Naive thymus-derived CD4-positive, alpha-beta T cell (primary cell): ENCODE measurements at regions of chr12 and their contacts with region 1.

Region 1: DNA sequence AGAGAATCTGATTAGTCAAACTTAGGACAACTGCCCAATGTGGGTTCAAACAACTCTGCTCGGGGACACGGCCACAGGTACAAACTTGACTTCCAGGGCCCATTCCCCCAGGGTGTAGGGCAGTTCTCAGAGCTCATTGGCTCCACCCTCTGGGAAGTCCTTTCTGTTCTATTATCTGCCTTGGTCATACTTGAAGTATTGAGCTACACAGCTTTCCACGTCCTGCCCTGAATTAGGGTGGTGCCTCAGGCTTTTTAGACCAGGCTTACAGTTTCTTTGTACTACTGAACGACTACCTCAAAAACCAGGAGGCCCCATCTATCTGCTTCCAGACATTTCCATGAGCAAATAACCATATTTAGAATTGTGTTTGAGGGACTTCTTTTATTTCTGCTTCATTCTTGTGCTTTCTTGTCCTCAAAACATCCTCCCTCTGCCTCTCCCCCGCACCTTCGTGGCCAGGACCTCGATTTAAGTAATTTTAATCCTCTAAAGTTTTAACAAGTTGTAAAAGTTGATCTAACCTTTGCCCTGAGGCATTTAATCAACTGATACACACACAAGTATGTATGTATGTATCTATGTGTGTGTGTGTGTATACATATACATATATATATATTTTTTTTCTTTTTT is 281.7 kb upstream of the AMIGO2 start:
- DNase-seq: peak in 8 of 9 donors; percentile 10 to 50 (median 32)
- ATAC-seq: peak; percentile 68
- H3K4me3 ChIP-seq: peak overlapping the region; percentile 48
- H3K4me3 Mint-ChIP-seq: peak overlapping the region; percentile 78 to 88 (median 84)
- H3K27ac ChIP-seq: peak overlapping the region; percentile 80
- H3K27ac Mint-ChIP-seq: peak overlapping the region in 8 of 9 donors; percentile 96 to 100 (median 98)
- H3K4me1 ChIP-seq: peaks cover 56 to 67% of the 10 kb centered on the region in 2 donors
- H3K4me1 Mint-ChIP-seq: peaks cover 52 to 68% (median 59%) of the 10 kb centered on the region in 7 donors
- H3K27me3 ChIP-seq: no peaks in the 10 kb centered on the region
- H3K27me3 Mint-ChIP-seq: no peaks in the 10 kb centered on the region

Region 2: GRCh38 chr12:46372544-46373110 is 988.9 kb before region 1 on chr12 and contains the start of gene SLC38A2:
- CTCF ChIA-PET with region 1: no interaction called
- POLR2A ChIA-PET with region 1: no interaction called
- intact Hi-C with region 1: loop called in 1 of 2 experiments (anchors 2 kb)
- DNase-seq: peak; percentile 95 to 98 (median 96)
- ATAC-seq: peak; percentile 96
- H3K4me3 ChIP-seq: peak within 1 kb of the TSS; percentile 87
- H3K4me3 Mint-ChIP-seq: peak within 1 kb of the TSS; percentile 79 to 99 (median 96)
- H3K27ac ChIP-seq: peak within 1 kb of the TSS; percentile 89
- H3K27ac Mint-ChIP-seq: peak within 1 kb of the TSS; percentile 91 to 100 (median 99)
- H3K4me1 ChIP-seq: peaks cover 37 to 41% of the 10 kb centered on the region in 2 donors
- H3K4me1 Mint-ChIP-seq: peaks cover 31 to 68% (median 59%) of the 10 kb centered on the region in 7 donors
- H3K27me3 ChIP-seq: no peaks in the 10 kb centered on the region
- H3K27me3 Mint-ChIP-seq: peaks cover 0 to 11% (median 0%) of the 10 kb centered on the region in 5 donors
- total RNA-seq, gene SLC38A2: 157 to 269 (median 175) TPM

Region 3: DNA sequence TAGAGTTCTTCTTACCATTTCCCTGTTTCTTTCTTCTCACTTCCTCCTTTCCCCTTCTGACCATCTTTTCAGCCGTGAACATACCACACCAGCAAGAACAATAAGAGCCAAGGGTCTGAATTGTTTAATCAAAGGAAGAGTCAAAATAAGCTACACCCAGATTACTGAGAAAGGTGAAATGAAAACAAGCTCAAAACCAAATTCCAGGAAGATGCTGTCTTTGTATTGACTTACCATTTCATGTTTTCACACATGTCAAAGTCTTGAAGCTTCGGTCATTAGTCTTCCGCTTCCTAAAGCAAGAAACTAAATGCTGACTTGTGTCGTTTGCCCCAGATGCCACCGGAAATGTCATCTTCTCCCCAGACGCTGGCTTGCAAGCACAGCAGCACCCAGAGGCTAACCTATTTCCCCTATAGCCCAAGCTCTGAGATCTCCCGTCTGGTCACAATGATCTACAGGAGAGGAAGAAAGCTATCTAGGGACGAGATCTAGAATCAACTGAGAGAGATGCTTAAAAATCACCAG is 145.3 kb before region 1 on chr12:
- CTCF ChIA-PET with region 1: interaction called, 3 read pairs
- POLR2A ChIA-PET with region 1: interaction called, 21 read pairs
- intact Hi-C with region 1: loop called (anchors 1 kb)
- DNase-seq: peak in 8 of 9 donors; percentile 56 to 82 (median 72)
- ATAC-seq: peak; percentile 81
- H3K4me3 ChIP-seq: peak overlapping the region; percentile 80
- H3K4me3 Mint-ChIP-seq: peak overlapping the region; percentile 91 to 100 (median 98)
- H3K27ac ChIP-seq: peak overlapping the region; percentile 76
- H3K27ac Mint-ChIP-seq: peak overlapping the region; percentile 91 to 98 (median 96)
- H3K4me1 ChIP-seq: peaks cover 9 to 14% of the 10 kb centered on the region in 2 donors
- H3K4me1 Mint-ChIP-seq: peaks cover 6 to 52% (median 26%) of the 10 kb centered on the region in 7 donors
- H3K27me3 ChIP-seq: no peaks in the 10 kb centered on the region
- H3K27me3 Mint-ChIP-seq: peaks cover 0 to 4% (median 0%) of the 10 kb centered on the region in 5 donors

Region 4: DNA sequence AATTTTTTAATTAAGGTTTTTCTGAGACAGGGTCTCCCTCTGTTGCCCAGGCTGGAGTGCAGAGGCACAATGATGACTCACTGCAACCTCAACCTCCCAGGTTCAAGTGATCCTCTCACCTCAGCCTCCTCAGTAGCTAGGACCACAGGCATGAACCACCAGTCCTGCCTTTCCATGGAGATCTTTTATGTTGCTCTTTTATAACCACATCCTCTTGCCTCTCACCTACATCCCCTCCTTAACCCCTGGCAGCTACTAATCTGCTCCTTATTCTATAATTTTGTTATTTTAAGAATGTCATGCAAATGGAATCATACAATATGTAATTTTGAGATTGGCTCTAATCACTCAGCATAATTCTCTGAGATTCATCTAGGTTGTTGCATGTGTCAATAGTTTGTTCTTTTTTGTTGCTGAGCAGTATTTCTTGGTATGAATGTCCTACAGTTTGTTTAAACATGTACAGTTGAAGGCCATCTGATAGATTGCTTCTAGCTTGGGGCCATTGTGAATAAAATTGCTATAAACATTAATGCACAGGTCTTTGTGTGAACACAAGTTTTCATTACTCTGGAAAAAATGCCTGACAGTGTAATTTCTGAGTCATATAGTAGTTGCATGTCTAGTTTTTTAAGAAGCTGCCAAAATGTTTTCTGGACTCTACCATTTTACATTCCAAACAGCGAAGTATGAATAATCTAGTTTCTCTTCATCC is 32.5 kb before region 1 on chr12:
- CTCF ChIA-PET with region 1: interaction called, 5 read pairs
- POLR2A ChIA-PET with region 1: no interaction called
- intact Hi-C with region 1: loop called in 1 of 2 experiments (anchors 5 kb)
- DNase-seq: peak in 1 of 9 donors; percentile 10
- ATAC-seq: no peak
- H3K4me3 ChIP-seq: no peak overlapping the region
- H3K4me3 Mint-ChIP-seq: peak overlapping the region in 3 of 10 donors; percentile 44 to 57 (median 47)
- H3K27ac ChIP-seq: no peak overlapping the region
- H3K27ac Mint-ChIP-seq: peak overlapping the region in 8 of 9 donors; percentile 3 to 74 (median 14)
- H3K4me1 ChIP-seq: peaks cover 5 to 14% of the 10 kb centered on the region in 2 donors
- H3K4me1 Mint-ChIP-seq: peaks cover 15 to 33% (median 27%) of the 10 kb centered on the region in 7 donors
- H3K27me3 ChIP-seq: no peaks in the 10 kb centered on the region
- H3K27me3 Mint-ChIP-seq: no peaks in the 10 kb centered on the region

Region 5: GRCh38 chr12:47391566-47391965 is 30.1 kb after region 1 on chr12:
- CTCF ChIA-PET with region 1: interaction called, 11 read pairs
- POLR2A ChIA-PET with region 1: interaction called, 30 read pairs
- intact Hi-C with region 1: loop called (anchors 1 kb)
- DNase-seq: peak; percentile 22 to 78 (median 67)
- ATAC-seq: peak; percentile 91
- H3K4me3 ChIP-seq: no peak overlapping the region
- H3K4me3 Mint-ChIP-seq: peak overlapping the region; percentile 32 to 88 (median 69)
- H3K27ac ChIP-seq: peak overlapping the region; percentile 66
- H3K27ac Mint-ChIP-seq: peak overlapping the region; percentile 91 to 100 (median 97)
- H3K4me1 ChIP-seq: peaks cover 49 to 58% of the 10 kb centered on the region in 2 donors
- H3K4me1 Mint-ChIP-seq: peaks cover 44 to 79% (median 76%) of the 10 kb centered on the region in 7 donors
- H3K27me3 ChIP-seq: no peaks in the 10 kb centered on the region
- H3K27me3 Mint-ChIP-seq: no peaks in the 10 kb centered on the region